MCF 10A (cell line): ENCODE measurements at regions of chr2 and their contacts with region 1.

Region 1: DNA sequence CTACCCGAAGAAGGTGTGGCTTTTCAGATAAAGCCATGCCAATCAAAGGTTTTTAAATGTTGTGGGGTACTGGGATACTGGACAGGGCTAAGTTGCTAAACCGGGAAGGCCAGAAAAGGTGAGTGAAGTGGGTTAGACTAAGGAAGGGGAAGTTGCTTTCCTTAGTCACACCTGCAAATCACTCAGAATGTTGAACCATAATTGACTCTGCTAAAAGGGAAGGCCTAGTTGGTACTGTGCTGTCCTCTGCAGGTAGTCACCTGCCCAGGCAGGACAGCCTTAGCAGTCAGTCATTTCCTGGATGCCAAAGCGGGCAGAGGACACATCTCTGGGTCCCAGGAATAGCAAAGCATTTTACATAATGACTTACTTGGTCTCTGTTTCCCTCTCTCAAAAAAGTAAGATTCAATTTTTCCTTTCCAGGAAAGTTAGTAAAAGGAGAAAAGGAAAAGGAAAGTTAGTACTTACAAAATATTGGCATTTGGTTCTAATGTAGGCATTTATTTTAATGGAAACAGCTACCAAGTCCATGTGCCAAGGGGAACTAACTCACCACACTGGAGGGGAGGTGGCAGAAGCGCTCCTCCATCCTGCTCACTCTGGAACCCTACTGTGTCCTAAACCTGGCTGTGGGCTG is 60.3 kb downstream of the RFTN2 start:
- DNase-seq: peak; percentile 60
- H3K4me3 Mint-ChIP-seq: no peak overlapping the region
- H3K27ac Mint-ChIP-seq: peak overlapping the region; percentile 9
- H3K4me1 Mint-ChIP-seq: peaks cover 22% of the 10 kb centered on the region
- H3K27me3 Mint-ChIP-seq: no peaks in the 10 kb centered on the region
- CTCF ChIP-seq: peak; percentile 7

Region 2: DNA sequence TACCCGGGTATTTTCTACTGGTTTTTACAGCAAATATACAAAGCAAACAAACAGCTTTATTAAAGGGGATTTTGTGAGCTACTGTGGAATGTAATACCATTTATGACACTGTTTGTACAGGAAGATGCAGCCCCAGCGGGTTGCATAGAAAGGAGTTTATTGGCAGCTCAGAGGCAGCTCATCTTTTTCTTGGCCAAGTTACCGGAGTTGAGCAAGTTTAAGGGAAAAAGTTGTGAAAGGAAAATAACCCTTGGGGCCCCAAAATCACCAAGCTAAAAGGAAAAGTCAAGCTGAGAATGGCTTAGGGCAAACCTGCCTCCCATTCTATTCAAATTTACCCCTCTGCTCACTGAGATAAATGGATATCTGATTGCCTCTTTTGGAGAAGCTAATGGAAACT is 38.5 kb before region 1 on chr2:
- CTCF ChIA-PET with region 1: interaction called, 18 read pairs
- POLR2A ChIA-PET with region 1: interaction called, 16 read pairs
- intact Hi-C with region 1: no loop called
- DNase-seq: peak; percentile 93
- H3K4me3 Mint-ChIP-seq: no peak overlapping the region
- H3K27ac Mint-ChIP-seq: peak overlapping the region; percentile 6
- H3K4me1 Mint-ChIP-seq: peaks cover 12% of the 10 kb centered on the region
- H3K27me3 Mint-ChIP-seq: no peaks in the 10 kb centered on the region
- CTCF ChIP-seq: no peak